ENCODE measurements at regions of chr19 and their contacts with region 1.

Region 1: GRCh38 chr19:1241417-1242095 is at the start of gene ATP5F1D:
- DNase-seq: peak in 1 of 2 donors; percentile 95
- H3K4me3 ChIP-seq: peak within 1 kb of the TSS; percentile 72 to 93
- H3K27ac ChIP-seq: peak within 1 kb of the TSS; percentile 85 to 92
- H3K4me1 ChIP-seq: peaks cover 37 to 60% of the 10 kb centered on the region in 2 donors
- H3K27me3 ChIP-seq: no peaks in the 10 kb centered on the region
- CTCF ChIP-seq: no peak
- total RNA-seq, gene ATP5F1D: 232 TPM

Region 2: GRCh38 chr19:1103708-1104310 is 137.7 kb before region 1 on chr19 and contains the start of gene GPX4:
- intact Hi-C with region 1: loop called (anchors 2 kb)
- DNase-seq: peak; percentile 95 to 99
- H3K4me3 ChIP-seq: peak within 1 kb of the TSS; percentile 84 to 93
- H3K27ac ChIP-seq: peak within 1 kb of the TSS; percentile 99
- H3K4me1 ChIP-seq: peaks cover 30 to 43% of the 10 kb centered on the region in 2 donors
- H3K27me3 ChIP-seq: no peaks in the 10 kb centered on the region
- CTCF ChIP-seq: no peak
- total RNA-seq, gene GPX4: 348 TPM

Region 3: DNA sequence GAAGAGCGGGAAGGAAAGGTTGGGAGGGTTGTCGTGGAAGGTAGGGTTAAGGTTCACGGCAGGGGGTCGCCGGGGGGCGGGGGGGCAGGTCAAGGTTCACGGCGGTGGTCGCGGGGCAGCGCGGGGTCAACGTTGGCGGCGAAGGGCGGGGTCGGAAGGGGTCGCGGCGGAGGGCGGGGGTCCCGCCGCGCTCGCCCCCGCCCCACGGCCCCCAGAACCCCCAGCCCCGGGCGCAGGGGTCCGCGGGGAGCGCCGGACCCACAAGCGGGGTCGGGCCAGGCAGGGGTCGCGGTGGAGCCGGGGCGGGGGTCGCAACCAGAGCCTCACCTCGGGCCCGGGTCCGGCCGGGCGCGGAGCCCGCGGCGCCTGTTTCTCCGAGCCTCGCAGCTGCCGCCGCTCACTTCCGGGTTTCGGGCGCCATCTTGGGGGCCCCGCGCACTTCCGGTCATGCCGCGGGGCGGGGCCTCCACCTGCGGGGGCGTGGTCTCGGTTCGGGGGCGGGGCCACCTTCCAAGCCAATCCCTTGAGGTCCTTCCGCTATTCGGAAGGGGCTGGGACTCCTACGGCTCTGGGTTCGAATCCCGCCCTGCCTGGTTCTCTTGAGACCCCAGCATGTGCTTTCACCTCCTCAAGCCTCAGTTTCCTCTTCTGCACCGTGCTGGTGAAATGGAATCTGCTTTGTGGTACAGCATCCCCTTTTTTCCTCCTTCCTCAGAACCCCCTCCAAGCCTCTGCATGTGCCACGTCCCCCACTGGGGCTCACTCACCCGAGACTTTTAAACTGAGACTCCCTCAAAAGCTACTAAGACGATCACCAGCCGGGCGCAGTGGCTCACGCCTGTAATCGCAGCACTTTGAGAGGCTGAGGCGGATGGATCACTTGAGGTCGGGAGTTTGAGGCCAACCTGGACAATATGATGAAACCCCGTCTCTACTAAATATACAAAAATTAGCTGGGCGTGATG is 67.4 kb before region 1 on chr19 and contains the start of gene SBNO2:
- intact Hi-C with region 1: loop called (anchors 2 kb)
- DNase-seq: peak in 1 of 2 donors; percentile 93
- H3K4me3 ChIP-seq: peak within 1 kb of the TSS; percentile 87 to 93
- H3K27ac ChIP-seq: peak within 1 kb of the TSS; percentile 93 to 94
- H3K4me1 ChIP-seq: peaks cover 0 to 15% of the 10 kb centered on the region in 2 donors
- H3K27me3 ChIP-seq: no peaks in the 10 kb centered on the region
- CTCF ChIP-seq: no peak
- total RNA-seq, gene SBNO2: 120 TPM

Region 4: GRCh38 chr19:1189419-1189818 is 52.1 kb before region 1 on chr19:
- intact Hi-C with region 1: no loop called
- DNase-seq: no peak
- H3K4me3 ChIP-seq: no peak overlapping the region
- H3K27ac ChIP-seq: no peak overlapping the region
- H3K4me1 ChIP-seq: peaks cover 0 to 3% of the 10 kb centered on the region in 2 donors
- H3K27me3 ChIP-seq: no peaks in the 10 kb centered on the region
- CTCF ChIP-seq: no peak

Region 5: DNA sequence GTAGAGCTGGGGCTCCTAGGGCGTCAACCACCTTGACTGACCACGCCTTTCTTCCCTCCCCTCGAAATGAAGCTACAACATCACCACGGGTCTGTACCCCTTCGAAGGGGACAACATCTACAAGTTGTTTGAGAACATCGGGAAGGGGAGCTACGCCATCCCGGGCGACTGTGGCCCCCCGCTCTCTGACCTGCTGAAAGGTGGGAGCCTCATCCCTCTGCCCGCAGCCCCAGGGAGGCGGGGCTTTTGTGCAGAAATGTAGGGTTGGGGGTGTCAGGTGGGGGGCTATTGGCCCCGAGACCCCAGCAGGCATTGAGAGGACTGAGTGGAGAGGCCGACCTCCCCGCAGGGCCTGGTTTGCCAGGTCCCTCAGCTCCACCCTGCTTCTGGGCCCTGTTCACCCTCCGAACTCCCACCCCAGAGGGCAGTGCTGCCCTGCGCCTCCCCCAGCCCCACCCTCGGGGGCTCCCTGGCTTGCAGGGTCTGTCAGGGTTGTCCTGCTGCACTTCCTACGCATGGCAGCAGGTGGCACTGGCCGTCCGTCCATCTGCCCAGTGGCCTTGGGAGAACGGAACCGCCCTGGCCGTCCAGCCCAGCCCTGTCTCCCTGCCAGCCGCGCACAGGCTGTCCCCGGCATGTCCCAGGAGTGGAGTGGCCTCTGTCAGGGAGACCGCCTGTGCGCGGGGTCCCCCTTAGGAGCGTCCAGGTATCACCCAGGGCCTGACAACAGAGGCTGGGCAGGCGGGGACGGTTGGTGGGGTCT is 20.2 kb before region 1 on chr19:
- intact Hi-C with region 1: loop called (anchors 1 kb)
- DNase-seq: peak in 1 of 2 donors; percentile 83
- H3K4me3 ChIP-seq: no peak overlapping the region
- H3K27ac ChIP-seq: peak overlapping the region; percentile 12 to 57
- H3K4me1 ChIP-seq: peaks cover 6 to 37% of the 10 kb centered on the region in 2 donors
- H3K27me3 ChIP-seq: no peaks in the 10 kb centered on the region
- CTCF ChIP-seq: peak; percentile 63 to 80 (median 74)

Region 6: GRCh38 chr19:1470203-1471009 is 228.8 kb after region 1 on chr19:
- intact Hi-C with region 1: no loop called
- DNase-seq: no peak
- H3K4me3 ChIP-seq: peak overlapping the region; percentile 23 to 63
- H3K27ac ChIP-seq: no peak overlapping the region
- H3K4me1 ChIP-seq: peaks cover 37 to 41% of the 10 kb centered on the region in 2 donors
- H3K27me3 ChIP-seq: peaks cover 66% of the 10 kb centered on the region
- CTCF ChIP-seq: no peak